ENCODE measurements at regions of chr6 and their contacts with region 1.

Region 1: GRCh38 chr6:158213925-158214674 is 46.0 kb downstream of the GTF2H5 start:
- DNase-seq: peak; percentile 84
- ATAC-seq: peak; percentile 100
- H3K4me3 ChIP-seq: no peak overlapping the region
- H3K27ac ChIP-seq: no peak overlapping the region
- H3K4me1 ChIP-seq: no peaks in the 10 kb centered on the region
- H3K27me3 ChIP-seq: no peaks in the 10 kb centered on the region
- CTCF ChIP-seq: peak; percentile 95
- EP300 ChIP-seq: no peak
- POLR2A ChIP-seq: no peak
- RAD21 ChIP-seq: peak; percentile 92

Region 2: GRCh38 chr6:158518191-158519127 is 304.4 kb after region 1 on chr6:
- CTCF ChIA-PET with region 1: interaction called, 6 read pairs
- POLR2A ChIA-PET with region 1: no interaction called
- in situ Hi-C with region 1: loop called (anchors 25 kb)
- intact Hi-C with region 1: no loop called
- DNase-seq: peak; percentile 55
- ATAC-seq: peak; percentile 72
- H3K4me3 ChIP-seq: 0 out of 6 replicates have a peak overlapping the region, but pooled peaks of 1 of the 3 experiments have one; percentile 1
- H3K27ac ChIP-seq: no peak overlapping the region
- H3K4me1 ChIP-seq: 0 out of 2 replicates have a peak, but pooled peaks cover 7% of the 10 kb centered on the region
- H3K27me3 ChIP-seq: no peaks in the 10 kb centered on the region
- CTCF ChIP-seq: peak; percentile 71
- EP300 ChIP-seq: no peak
- POLR2A ChIP-seq: no peak
- RAD21 ChIP-seq: peak; percentile 23; the same call in 1 of the 2 replicates

Region 3: GRCh38 chr6:158605266-158605878 is 391.3 kb after region 1 on chr6:
- CTCF ChIA-PET with region 1: interaction called, 8 read pairs
- POLR2A ChIA-PET with region 1: no interaction called
- in situ Hi-C with region 1: no loop called
- intact Hi-C with region 1: loop called (anchors 1 kb)
- DNase-seq: peak; percentile 72
- ATAC-seq: peak; percentile 73
- H3K4me3 ChIP-seq: no peak overlapping the region
- H3K27ac ChIP-seq: no peak overlapping the region
- H3K4me1 ChIP-seq: no peaks in the 10 kb centered on the region
- H3K27me3 ChIP-seq: no peaks in the 10 kb centered on the region
- CTCF ChIP-seq: peak; percentile 70
- EP300 ChIP-seq: no peak
- POLR2A ChIP-seq: no peak; a peak in 1 of 4 replicates
- RAD21 ChIP-seq: peak; percentile 67

Region 4: GRCh38 chr6:158686791-158687381 is 472.8 kb after region 1 on chr6:
- CTCF ChIA-PET with region 1: interaction called, 16 read pairs
- POLR2A ChIA-PET with region 1: no interaction called
- in situ Hi-C with region 1: no loop called
- intact Hi-C with region 1: loop called (anchors 1 kb)
- DNase-seq: no peak
- ATAC-seq: no peak
- H3K4me3 ChIP-seq: no peak overlapping the region
- H3K27ac ChIP-seq: no peak overlapping the region
- H3K4me1 ChIP-seq: 0 out of 2 replicates have a peak, but pooled peaks cover 6% of the 10 kb centered on the region
- H3K27me3 ChIP-seq: peaks cover 0 to 28% of the 10 kb centered on the region in 2 experiments; a peak in 3 of 5 replicates
- CTCF ChIP-seq: no peak
- EP300 ChIP-seq: no peak
- POLR2A ChIP-seq: no peak
- RAD21 ChIP-seq: no peak